Motor neuron (in vitro differentiated cells): ENCODE measurements at regions of chr2 and their contacts with region 1.

Region 1: GRCh38 chr2:187574969-187575750 is 20.9 kb upstream of the TFPI start:
- ATAC-seq: peak in 1 of 8 experiments; percentile 57
- H3K4me3 ChIP-seq: no peak overlapping the region
- H3K27ac ChIP-seq: no peak overlapping the region
- H3K4me1 ChIP-seq: no peaks in the 10 kb centered on the region

Region 2: GRCh38 chr2:187499941-187500532 is 75.1 kb before region 1 on chr2:
- in situ Hi-C with region 1: loop called in 3 of 9 experiments (anchors 10 kb)
- ATAC-seq: peak in 5 of 8 experiments; percentile 47 to 68 (median 62)
- H3K4me3 ChIP-seq: no peak overlapping the region
- H3K27ac ChIP-seq: no peak overlapping the region
- H3K4me1 ChIP-seq: no peaks in the 10 kb centered on the region